SK-N-SH (cell line): ENCODE measurements at regions of chr6 and their contacts with region 1.

Region 1: GRCh38 chr6:11653028-11653583 is 115.6 kb downstream of the TMEM170B start:
- DNase-seq: no peak
- H3K4me3 ChIP-seq: no peak overlapping the region
- H3K27ac ChIP-seq: peak overlapping the region in 1 of 2 experiments; percentile 67; a peak in 2 of 4 replicates
- H3K4me1 ChIP-seq: peaks cover 2 to 35% of the 10 kb centered on the region in 2 experiments; a peak in 3 of 4 replicates
- H3K27me3 ChIP-seq: no peaks in the 10 kb centered on the region
- CTCF ChIP-seq: no peak
- EP300 ChIP-seq: peak in 1 of 2 experiments; percentile 55; a peak in 1 of 4 replicates
- RAD21 ChIP-seq: no peak

Region 2: GRCh38 chr6:11585426-11586016 is 67.6 kb before region 1 on chr6:
- CTCF ChIA-PET with region 1: interaction called, 17 read pairs
- POLR2A ChIA-PET with region 1: no interaction called
- DNase-seq: peak; percentile 51
- H3K4me3 ChIP-seq: no peak overlapping the region
- H3K27ac ChIP-seq: no peak overlapping the region; a peak in 1 of 4 replicates
- H3K4me1 ChIP-seq: peaks cover 0 to 8% of the 10 kb centered on the region in 2 experiments; a peak in 2 of 4 replicates
- H3K27me3 ChIP-seq: no peaks in the 10 kb centered on the region
- CTCF ChIP-seq: peak; percentile 81
- EP300 ChIP-seq: no peak
- RAD21 ChIP-seq: peak; percentile 85

Region 3: GRCh38 chr6:11665604-11666326 is 12.7 kb after region 1 on chr6:
- CTCF ChIA-PET with region 1: interaction called, 43 read pairs
- POLR2A ChIA-PET with region 1: no interaction called
- DNase-seq: no peak
- H3K4me3 ChIP-seq: no peak overlapping the region
- H3K27ac ChIP-seq: no peak overlapping the region
- H3K4me1 ChIP-seq: no peaks in the 10 kb centered on the region
- H3K27me3 ChIP-seq: no peaks in the 10 kb centered on the region
- CTCF ChIP-seq: no peak
- EP300 ChIP-seq: no peak
- RAD21 ChIP-seq: no peak

Region 4: DNA sequence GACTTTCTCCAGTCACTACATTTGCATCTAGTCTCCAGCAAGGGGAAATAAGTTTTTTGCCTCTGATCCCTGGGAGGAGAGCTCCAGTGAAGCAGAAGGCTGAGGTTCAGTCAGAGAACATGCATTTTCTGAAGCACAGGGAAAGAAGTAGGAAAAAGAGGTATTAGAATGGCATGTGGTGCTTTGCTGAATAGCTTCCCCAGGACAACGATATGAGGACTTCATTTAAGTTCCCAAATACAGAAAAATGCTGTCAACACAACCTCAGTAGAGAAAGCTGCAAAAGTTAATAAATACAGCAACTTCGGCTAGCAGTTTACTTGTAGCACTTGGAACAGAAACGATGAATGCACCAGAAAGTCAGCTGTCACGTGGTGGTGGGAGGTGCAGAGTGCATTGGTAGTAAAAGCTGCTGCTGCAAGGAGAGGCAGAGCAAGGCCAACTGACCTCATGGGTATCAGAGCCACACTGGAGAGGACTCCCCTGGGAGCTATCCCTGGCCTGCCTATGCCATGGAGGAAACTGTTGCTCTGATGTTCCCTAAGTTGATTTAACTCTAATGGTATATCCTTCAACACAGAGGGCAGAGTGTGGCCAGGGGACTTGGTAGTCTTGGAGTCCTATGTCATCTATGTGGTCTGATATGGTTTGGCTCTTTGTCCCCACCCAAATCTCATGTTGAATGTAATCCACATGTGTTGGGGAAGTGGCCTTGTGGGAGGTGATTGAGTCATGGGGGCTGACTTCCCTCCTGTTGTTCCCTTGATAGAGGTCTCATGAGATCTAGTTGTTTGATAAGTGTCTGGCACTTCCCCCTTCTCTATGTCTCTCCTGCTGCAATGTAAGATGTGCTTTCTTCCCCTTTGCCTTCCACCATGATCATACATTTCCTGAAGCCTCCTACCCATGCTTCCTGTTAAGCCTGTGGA is 39.6 kb after region 1 on chr6:
- CTCF ChIA-PET with region 1: interaction called, 11 read pairs
- POLR2A ChIA-PET with region 1: no interaction called
- DNase-seq: no peak
- H3K4me3 ChIP-seq: no peak overlapping the region
- H3K27ac ChIP-seq: no peak overlapping the region
- H3K4me1 ChIP-seq: no peaks in the 10 kb centered on the region
- H3K27me3 ChIP-seq: no peaks in the 10 kb centered on the region
- CTCF ChIP-seq: no peak
- EP300 ChIP-seq: no peak
- RAD21 ChIP-seq: no peak

Region 5: GRCh38 chr6:11754625-11755271 is 101.6 kb after region 1 on chr6:
- CTCF ChIA-PET with region 1: no interaction called
- POLR2A ChIA-PET with region 1: no interaction called
- DNase-seq: no peak
- H3K4me3 ChIP-seq: no peak overlapping the region
- H3K27ac ChIP-seq: peak overlapping the region in 1 of 2 experiments; percentile 42; a peak in 2 of 4 replicates
- H3K4me1 ChIP-seq: peaks cover 0 to 7% of the 10 kb centered on the region in 2 experiments; a peak in 1 of 4 replicates
- H3K27me3 ChIP-seq: no peaks in the 10 kb centered on the region
- CTCF ChIP-seq: no peak
- EP300 ChIP-seq: no peak
- RAD21 ChIP-seq: no peak

Region 6: GRCh38 chr6:12289933-12290820 is 637.1 kb after region 1 on chr6 and contains the start of gene EDN1:
- CTCF ChIA-PET with region 1: interaction called, 41 read pairs
- POLR2A ChIA-PET with region 1: no interaction called
- DNase-seq: peak; percentile 82
- H3K4me3 ChIP-seq: peak within 1 kb of the TSS; percentile 62 to 79
- H3K27ac ChIP-seq: peak within 1 kb of the TSS; percentile 50 to 79; a peak in 3 of 4 replicates
- H3K4me1 ChIP-seq: peaks cover 2 to 4% of the 10 kb centered on the region in 2 experiments; a peak in 3 of 4 replicates
- H3K27me3 ChIP-seq: no peaks in the 10 kb centered on the region
- CTCF ChIP-seq: peak; percentile 46
- EP300 ChIP-seq: 0 out of 4 replicates have a peak, but pooled peaks of 1 of the 2 experiments have one; percentile 19
- RAD21 ChIP-seq: peak; percentile 33; the same call in 1 of the 2 replicates
- polyA plus RNA-seq, gene EDN1: 1.3 TPM in 2 replicates